Activated CD8-positive, alpha-beta memory T cell treated with anti-CD3 and anti-CD28 coated beads, Interleukin-2, amount 10 ng/mL, durations not matched to agents 7 days and 5 days (primary cell): ENCODE measurements at regions of chr10 and their contacts with region 1.

Region 1: GRCh38 chr10:133260895-133261725 is 15.6 kb downstream of the ADAM8 start:
- DNase-seq: peak; percentile 82
- ATAC-seq: peak; percentile 51
- H3K4me3 Mint-ChIP-seq: peak overlapping the region; percentile 65
- H3K27ac Mint-ChIP-seq: peak overlapping the region; percentile 66
- H3K4me1 Mint-ChIP-seq: peaks cover 75% of the 10 kb centered on the region
- H3K27me3 Mint-ChIP-seq: no peaks in the 10 kb centered on the region

Region 2: DNA sequence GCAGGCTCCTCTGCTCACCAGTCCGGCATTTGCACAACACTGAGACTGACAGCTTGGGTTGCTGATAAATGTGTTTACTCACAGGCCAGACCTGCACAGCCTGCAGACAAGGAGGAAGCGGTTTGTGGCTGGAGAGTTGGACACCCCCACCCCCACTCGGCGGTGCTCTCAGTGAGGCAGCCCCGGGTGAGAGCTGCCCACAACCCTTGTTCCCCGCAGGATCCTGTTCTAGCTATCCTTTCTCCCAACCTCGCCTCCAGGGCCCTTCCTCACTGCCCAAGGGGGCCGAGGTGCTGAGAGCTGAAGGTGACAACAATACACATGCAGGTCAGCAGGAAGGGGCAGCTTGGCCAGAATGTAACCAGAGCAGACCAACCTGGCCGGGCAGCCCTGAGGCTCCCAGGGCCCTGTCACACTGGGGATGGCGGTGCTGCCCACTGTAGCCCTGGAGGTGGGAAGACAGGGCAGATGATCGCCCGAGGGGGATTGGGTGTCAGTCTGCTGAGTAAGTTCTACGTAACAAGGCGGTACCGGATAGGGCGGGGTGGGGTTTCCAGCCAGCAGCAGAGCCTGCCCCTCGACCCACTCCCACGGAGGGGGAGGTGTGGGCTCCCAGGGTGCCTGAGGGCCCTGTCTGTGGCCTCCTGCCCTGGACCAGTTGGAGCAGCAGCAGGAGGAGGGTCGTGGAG is 17.6 kb after region 1 on chr10:
- CTCF ChIA-PET with region 1: interaction called, 41 read pairs
- DNase-seq: peak; percentile 95
- ATAC-seq: peak; percentile 59
- H3K4me3 Mint-ChIP-seq: peak overlapping the region; percentile 78
- H3K27ac Mint-ChIP-seq: peak overlapping the region; percentile 99
- H3K4me1 Mint-ChIP-seq: peaks cover 36% of the 10 kb centered on the region
- H3K27me3 Mint-ChIP-seq: no peaks in the 10 kb centered on the region

Region 3: GRCh38 chr10:133308421-133309110 is 47.5 kb after region 1 on chr10 and contains the starts of genes TUBGCP2 and ZNF511:
- CTCF ChIA-PET with region 1: interaction called, 22 read pairs
- DNase-seq: peak; percentile 91
- ATAC-seq: peak; percentile 82
- H3K4me3 Mint-ChIP-seq: peak within 1 kb of the TSS; percentile 96
- H3K27ac Mint-ChIP-seq: peak within 1 kb of the TSS; percentile 97
- H3K4me1 Mint-ChIP-seq: peaks cover 25% of the 10 kb centered on the region
- H3K27me3 Mint-ChIP-seq: no peaks in the 10 kb centered on the region
- total RNA-seq, gene TUBGCP2: 60.4 to 64.7 TPM
- total RNA-seq, gene ZNF511: 50.7 to 60.1 TPM

Region 4: DNA sequence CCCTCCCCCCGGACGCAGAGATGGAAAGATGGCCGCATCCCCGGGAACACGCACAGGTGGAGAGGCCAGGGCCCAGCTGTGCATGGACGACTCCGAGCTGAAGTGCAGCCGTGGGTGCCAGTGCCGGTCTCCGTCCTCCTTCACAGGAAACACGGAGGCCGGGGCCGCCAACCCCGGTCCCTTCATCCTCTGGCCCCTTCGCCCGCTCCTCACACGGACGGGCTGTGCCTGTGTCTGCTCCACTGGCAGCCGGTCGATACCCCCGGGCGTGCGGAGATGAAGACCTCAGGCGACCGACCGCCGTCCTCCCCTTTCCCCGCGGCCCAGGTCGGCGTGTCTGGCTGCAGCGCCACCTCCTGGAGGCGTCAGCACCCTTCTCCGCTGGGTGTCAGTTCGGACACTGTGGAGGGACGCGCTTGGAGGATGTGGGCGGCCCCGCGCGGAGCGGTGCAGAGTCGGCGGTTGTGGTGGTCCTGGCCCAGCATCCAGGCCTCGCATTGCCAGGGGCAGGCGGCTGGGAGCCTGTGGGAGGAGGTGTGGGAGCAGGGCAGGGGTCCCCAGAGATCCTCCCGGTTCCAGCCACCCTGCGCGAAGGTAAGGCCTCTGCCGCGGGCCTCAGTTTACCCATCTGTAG is 57.5 kb after region 1 on chr10:
- CTCF ChIA-PET with region 1: interaction called, 12 read pairs
- DNase-seq: peak; percentile 77
- ATAC-seq: peak; percentile 93
- H3K4me3 Mint-ChIP-seq: peak overlapping the region; percentile 29
- H3K27ac Mint-ChIP-seq: no peak overlapping the region
- H3K4me1 Mint-ChIP-seq: peaks cover 4% of the 10 kb centered on the region
- H3K27me3 Mint-ChIP-seq: peaks cover 10% of the 10 kb centered on the region